Activated CD8-positive, alpha-beta T cell treated with anti-CD3 and anti-CD28 coated beads, Interleukin-2, amount 10 ng/mL, durations not matched to agents 7 days and 5 days (primary cell): ENCODE measurements at regions of chr17 and their contacts with region 1.

Region 1: DNA sequence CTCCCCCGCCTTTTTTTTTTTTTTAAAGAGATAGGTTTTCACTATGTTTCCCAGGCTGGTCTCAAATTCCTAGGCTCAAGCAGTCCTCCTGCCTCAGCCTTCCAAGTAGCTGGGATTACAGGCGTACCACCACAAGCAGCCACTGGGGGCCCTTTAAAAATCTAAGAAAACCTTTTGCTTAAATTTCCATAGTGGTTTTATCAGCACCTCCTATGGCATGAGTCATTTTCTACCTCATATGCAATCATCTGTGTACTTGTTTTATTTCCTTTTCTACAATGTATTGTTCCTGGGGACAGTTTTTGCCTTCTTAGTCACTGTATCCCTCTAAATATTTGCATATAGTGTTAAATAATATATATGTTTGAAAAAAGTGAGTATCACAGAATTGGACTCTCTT is 29.2 kb downstream of the GNA13 start:
- DNase-seq: peak; percentile 59
- ATAC-seq: peak; percentile 76
- H3K4me3 Mint-ChIP-seq: no peak overlapping the region
- H3K27ac Mint-ChIP-seq: peak overlapping the region; percentile 23
- H3K4me1 Mint-ChIP-seq: peaks cover 63% of the 10 kb centered on the region
- H3K27me3 Mint-ChIP-seq: no peaks in the 10 kb centered on the region

Region 2: GRCh38 chr17:65039336-65039988 is 12.2 kb after region 1 on chr17:
- CTCF ChIA-PET with region 1: interaction called, 11 read pairs
- POLR2A ChIA-PET with region 1: no interaction called
- DNase-seq: peak; percentile 71
- ATAC-seq: peak; percentile 88
- H3K4me3 Mint-ChIP-seq: peak overlapping the region; percentile 41
- H3K27ac Mint-ChIP-seq: peak overlapping the region; percentile 83
- H3K4me1 Mint-ChIP-seq: peaks cover 80% of the 10 kb centered on the region
- H3K27me3 Mint-ChIP-seq: no peaks in the 10 kb centered on the region